HEK293T (cell line): ENCODE measurements at regions of chr6 and their contacts with region 1.

Region 1: DNA sequence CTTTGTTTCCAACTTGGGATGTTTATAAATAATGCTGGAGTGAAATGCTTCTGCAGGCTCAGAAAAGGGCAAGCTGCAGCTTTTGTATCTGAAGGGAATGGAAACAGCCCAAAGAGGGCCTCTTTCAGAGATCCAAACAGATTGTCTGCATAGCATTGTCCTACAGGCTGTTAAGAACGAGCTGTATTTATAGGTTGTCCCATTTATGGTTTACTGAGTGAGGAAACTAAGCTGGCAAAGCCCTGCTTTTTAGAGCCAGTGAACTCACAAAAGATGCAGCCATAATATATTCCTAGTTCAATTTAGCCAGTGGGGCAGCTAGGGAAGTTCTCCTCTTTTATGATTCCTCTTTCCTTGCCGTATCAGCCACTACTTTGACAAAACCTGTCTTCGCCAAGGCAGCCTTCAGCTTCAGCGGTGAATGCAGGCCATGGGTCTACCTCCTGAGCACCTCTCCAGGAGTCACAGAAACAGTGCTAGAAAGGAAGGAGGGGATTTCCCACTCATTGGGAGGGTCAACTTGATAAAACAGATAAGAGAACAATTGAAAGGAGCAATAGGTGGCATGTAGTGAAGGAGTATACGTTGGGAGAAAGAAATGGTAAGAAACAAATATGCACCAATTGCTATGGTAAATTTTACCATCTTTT is 15.0 kb downstream of the KIAA0319 start:
- DNase-seq: no peak

Region 2: GRCh38 chr6:24581084-24581669 is 49.8 kb before region 1 on chr6:
- CTCF ChIA-PET with region 1: no interaction called
- POLR2A ChIA-PET with region 1: no interaction called
- DNase-seq: peak; percentile 62

Region 3: GRCh38 chr6:24599179-24599578 is 31.8 kb before region 1 on chr6:
- CTCF ChIA-PET with region 1: interaction called, 12 read pairs
- POLR2A ChIA-PET with region 1: no interaction called
- DNase-seq: no peak